ENCODE measurements at regions of chr13 and their contacts with region 1.

Region 1: DNA sequence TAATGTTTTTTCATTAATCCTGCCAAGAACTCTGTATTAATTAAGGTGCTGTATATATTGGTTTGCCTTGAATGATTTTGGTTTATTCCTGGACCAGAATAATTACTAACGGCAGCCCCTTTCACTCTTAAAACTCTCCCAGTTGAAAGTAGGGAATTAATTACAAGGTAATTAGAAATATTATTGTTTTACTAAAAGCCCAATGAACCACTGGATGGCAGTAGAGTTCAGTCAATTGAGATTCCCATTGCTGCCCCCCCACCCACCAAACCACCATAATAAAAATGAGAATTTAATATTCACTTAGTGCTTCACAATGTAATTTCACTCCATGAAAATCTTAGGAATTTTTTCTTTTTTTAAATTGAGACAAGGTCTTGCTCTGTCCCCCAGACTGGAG is 13.7 kb downstream of the WBP4 start:
- DNase-seq: no peak
- H3K4me3 Mint-ChIP-seq: no peak overlapping the region
- H3K27ac Mint-ChIP-seq: no peak overlapping the region
- H3K4me1 Mint-ChIP-seq: no peaks in the 10 kb centered on the region
- H3K27me3 Mint-ChIP-seq: no peaks in the 10 kb centered on the region

Region 2: GRCh38 chr13:41085961-41086585 is 11.0 kb after region 1 on chr13:
- CTCF ChIA-PET with region 1: interaction called, 10 read pairs
- POLR2A ChIA-PET with region 1: no interaction called
- intact Hi-C with region 1: no loop called
- DNase-seq: no peak
- H3K4me3 Mint-ChIP-seq: no peak overlapping the region
- H3K27ac Mint-ChIP-seq: no peak overlapping the region
- H3K4me1 Mint-ChIP-seq: no peaks in the 10 kb centered on the region
- H3K27me3 Mint-ChIP-seq: no peaks in the 10 kb centered on the region

Region 3: DNA sequence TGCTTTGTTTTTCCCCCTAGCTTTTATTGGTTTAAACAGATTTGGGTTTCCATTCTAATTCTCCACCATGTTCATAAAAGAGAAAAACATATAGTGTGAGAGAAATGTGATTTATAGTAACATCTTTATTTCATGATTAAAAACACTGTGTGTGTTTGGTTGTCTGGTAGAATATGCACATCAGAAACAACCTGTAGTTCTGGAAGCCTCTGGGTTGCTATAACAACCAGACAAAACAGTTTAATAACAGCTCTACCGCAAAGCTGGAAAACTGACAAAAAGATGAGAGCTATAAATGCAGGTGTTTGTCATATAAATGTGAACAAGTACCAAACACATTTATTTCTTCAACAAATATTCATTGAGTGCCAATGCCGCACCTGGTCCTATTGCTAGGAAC is 47.8 kb after region 1 on chr13:
- CTCF ChIA-PET with region 1: interaction called, 3 read pairs
- POLR2A ChIA-PET with region 1: no interaction called
- intact Hi-C with region 1: loop called (anchors 5 kb)
- DNase-seq: no peak
- H3K4me3 Mint-ChIP-seq: no peak overlapping the region
- H3K27ac Mint-ChIP-seq: no peak overlapping the region
- H3K4me1 Mint-ChIP-seq: peaks cover 3% of the 10 kb centered on the region
- H3K27me3 Mint-ChIP-seq: no peaks in the 10 kb centered on the region

Region 4: DNA sequence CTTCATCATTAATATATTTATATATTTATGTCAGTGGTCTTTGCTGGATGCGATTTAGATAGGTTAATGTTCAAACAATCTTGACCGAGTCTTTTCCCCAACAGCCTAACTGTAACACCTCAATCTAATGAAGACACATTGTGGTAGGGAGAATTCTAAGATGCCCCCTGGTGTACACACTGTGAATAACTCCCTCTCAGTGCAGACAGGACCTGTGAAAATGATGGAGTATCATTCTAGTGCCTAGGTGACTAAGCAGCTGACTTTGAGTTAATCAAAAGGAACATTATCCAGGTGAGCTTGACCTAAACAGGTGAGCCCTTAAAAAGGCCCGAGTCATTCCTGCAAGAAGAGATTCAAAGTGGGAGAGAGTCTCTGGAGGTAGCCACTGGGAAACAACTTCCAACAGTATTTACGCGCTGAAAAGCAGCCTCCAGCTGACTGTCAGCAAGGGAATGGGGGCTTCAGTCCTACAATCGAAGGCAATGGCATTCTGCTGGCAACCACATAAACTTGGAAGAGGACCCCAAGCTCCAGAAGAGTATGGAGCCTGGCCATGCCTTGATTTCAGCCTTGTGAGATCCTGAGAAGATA is 147.3 kb after region 1 on chr13:
- CTCF ChIA-PET with region 1: interaction called, 36 read pairs
- POLR2A ChIA-PET with region 1: no interaction called
- intact Hi-C with region 1: loop called (anchors 1 kb)
- DNase-seq: peak; percentile 62
- H3K4me3 Mint-ChIP-seq: no peak overlapping the region
- H3K27ac Mint-ChIP-seq: no peak overlapping the region
- H3K4me1 Mint-ChIP-seq: no peaks in the 10 kb centered on the region
- H3K27me3 Mint-ChIP-seq: no peaks in the 10 kb centered on the region

Region 5: DNA sequence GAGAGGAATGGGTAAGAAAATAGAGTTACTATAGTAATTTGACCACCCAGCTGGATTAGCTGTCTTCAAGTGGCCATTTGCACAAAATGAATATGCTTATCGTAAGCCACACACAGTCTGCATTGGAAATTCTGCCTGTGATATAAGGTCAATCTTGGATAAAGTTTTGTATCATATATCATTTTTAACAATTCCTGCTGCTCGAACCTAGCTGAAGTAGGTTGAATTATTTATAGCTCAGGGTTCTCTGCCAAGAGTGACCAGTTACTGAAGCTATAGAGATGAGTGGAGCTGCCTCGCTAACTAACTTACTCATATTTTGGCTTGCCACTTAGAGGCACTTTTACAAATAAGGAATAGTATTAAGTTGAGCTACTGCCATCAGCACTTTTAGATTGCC is 603.2 kb after region 1 on chr13:
- CTCF ChIA-PET with region 1: no interaction called
- POLR2A ChIA-PET with region 1: no interaction called
- intact Hi-C with region 1: no loop called
- DNase-seq: no peak
- H3K4me3 Mint-ChIP-seq: no peak overlapping the region
- H3K27ac Mint-ChIP-seq: no peak overlapping the region
- H3K4me1 Mint-ChIP-seq: no peaks in the 10 kb centered on the region
- H3K27me3 Mint-ChIP-seq: no peaks in the 10 kb centered on the region

Measured in activated CD4-positive, alpha-beta memory T cell treated with anti-CD3 and anti-CD28 coated beads for 36 hours (primary cell).